Activated CD4-positive, alpha-beta T cell treated with anti-CD3 and anti-CD28 coated beads for 36 hours (primary cell): ENCODE measurements at regions of chr19 and their contacts with region 1.

Region 1: GRCh38 chr19:40598121-40598917 is 2.9 kb upstream of the LTBP4 start:
- DNase-seq: peak; percentile 92
- ATAC-seq: peak; percentile 71
- H3K4me3 Mint-ChIP-seq: peak overlapping the region; percentile 23
- H3K27ac Mint-ChIP-seq: no peak overlapping the region
- H3K4me1 Mint-ChIP-seq: peaks cover 50% of the 10 kb centered on the region
- H3K27me3 Mint-ChIP-seq: peaks cover 34% of the 10 kb centered on the region

Region 2: DNA sequence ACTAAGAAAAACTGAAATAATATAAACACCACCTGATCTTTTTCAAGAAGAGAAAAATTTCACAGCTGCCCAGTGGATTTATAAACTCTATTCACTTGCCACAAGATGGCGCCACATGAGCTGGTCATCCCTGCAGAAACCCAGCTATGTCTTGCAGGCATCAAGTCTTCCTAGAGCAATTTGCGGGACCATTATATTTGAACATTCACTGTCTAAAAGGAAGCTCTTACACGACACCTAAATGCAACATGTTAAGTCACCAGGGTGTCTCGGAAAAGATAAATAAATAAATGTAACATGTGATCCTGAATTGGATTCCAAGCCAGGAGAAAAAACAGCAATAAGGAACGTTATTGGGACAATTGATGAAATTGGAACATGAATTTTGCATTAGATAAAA is 292.9 kb before region 1 on chr19:
- CTCF ChIA-PET with region 1: interaction called, 5 read pairs
- POLR2A ChIA-PET with region 1: no interaction called
- intact Hi-C with region 1: loop called (anchors 1 kb)
- DNase-seq: peak; percentile 90
- ATAC-seq: peak; percentile 83
- H3K4me3 Mint-ChIP-seq: no peak overlapping the region
- H3K27ac Mint-ChIP-seq: no peak overlapping the region
- H3K4me1 Mint-ChIP-seq: no peaks in the 10 kb centered on the region
- H3K27me3 Mint-ChIP-seq: no peaks in the 10 kb centered on the region

Region 3: DNA sequence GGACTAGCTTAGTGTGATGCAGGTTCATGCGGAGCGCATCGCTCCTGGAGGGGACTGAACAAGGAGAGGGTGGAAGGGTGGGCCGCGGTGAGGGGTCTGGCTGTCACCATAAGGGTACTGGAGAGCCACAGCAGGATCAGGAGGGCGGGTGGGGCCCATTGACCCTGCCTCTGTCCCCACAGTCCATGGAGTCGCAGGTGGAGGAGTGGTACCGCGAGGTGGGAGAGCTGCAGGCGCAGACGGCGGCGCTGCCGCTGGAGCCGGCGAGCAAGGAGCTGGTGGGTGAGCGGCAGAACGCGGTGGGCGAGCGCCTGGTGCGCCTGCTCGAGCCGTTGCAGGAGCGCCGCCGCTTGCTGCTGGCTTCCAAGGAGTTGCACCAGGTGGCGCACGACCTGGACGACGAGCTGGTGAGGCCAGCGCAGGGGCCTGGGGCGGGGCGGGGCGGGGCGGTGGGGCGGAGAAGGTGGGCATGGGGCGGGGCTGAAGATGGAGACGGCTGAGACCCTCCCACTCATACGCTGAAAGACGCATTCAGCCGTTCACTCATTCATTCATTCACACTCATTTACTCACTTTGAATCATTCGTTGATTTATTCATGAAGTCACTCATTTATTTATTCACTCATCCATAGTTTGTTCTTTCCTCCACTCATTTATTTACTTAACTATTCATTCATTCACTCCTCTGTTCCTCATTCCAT is 49.2 kb before region 1 on chr19:
- CTCF ChIA-PET with region 1: interaction called, 15 read pairs
- POLR2A ChIA-PET with region 1: interaction called, 8 read pairs
- intact Hi-C with region 1: loop called (anchors 1 to 5 kb)
- DNase-seq: peak; percentile 90
- ATAC-seq: peak; percentile 95
- H3K4me3 Mint-ChIP-seq: no peak overlapping the region
- H3K27ac Mint-ChIP-seq: no peak overlapping the region
- H3K4me1 Mint-ChIP-seq: peaks cover 10% of the 10 kb centered on the region
- H3K27me3 Mint-ChIP-seq: peaks cover 37% of the 10 kb centered on the region

Region 4: DNA sequence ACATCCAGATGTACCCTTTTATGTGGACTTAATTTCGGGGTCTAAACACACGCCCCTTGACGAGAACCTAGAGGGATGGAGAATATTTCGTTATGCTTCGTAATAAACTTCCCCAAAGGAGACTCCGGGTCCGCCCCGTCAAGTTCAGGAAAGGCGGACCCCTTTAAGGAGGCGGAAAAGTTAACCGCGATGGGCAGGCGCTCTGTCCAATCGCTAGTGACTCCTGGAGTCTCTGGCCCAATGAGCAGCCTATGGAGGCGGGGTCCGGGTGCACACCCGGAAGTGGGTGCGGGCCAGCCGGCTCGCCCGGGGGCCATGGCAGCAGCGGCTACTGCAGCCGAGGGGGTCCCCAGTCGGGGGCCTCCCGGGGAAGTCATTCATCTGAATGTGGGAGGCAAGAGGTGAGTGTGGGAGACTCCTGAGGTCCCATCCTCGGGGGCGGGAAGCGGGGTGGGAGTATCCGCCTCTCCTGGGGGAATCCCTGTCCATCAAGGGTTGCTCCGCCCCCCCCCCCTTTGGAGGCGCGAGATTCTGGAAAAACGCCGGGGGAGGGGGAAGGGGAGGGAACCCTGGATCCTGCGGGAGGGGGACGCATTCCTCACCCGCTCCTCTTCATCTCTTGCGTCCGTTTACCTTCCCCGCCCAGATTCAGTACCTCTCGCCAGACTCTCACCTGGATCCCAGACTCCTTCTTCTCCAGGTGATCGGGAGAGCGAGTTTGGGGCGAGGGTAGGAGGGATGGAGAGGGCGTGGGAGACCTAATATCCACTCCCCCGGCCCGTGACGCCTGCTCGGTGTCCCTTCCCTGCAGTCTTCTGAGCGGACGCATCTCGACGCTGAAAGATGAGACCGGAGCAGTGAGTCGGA is 21.5 kb before region 1 on chr19 and contains the start of gene SHKBP1:
- CTCF ChIA-PET with region 1: interaction called, 4 read pairs
- POLR2A ChIA-PET with region 1: interaction called, 3 read pairs
- intact Hi-C with region 1: loop called in 1 of 2 experiments (anchors 1 kb)
- DNase-seq: peak; percentile 96
- ATAC-seq: peak; percentile 100
- H3K4me3 Mint-ChIP-seq: peak within 1 kb of the TSS; percentile 85
- H3K27ac Mint-ChIP-seq: peak within 1 kb of the TSS; percentile 74
- H3K4me1 Mint-ChIP-seq: peaks cover 16% of the 10 kb centered on the region
- H3K27me3 Mint-ChIP-seq: no peaks in the 10 kb centered on the region
- total RNA-seq, gene SHKBP1: 100 to 155 TPM